ENCODE measurements at regions of chr19 and their contacts with region 1.

Region 1: GRCh38 chr19:42280192-42281145 is 11.4 kb downstream of the CIC start:
- DNase-seq: peak; percentile 94 to 100 (median 98)

Region 2: DNA sequence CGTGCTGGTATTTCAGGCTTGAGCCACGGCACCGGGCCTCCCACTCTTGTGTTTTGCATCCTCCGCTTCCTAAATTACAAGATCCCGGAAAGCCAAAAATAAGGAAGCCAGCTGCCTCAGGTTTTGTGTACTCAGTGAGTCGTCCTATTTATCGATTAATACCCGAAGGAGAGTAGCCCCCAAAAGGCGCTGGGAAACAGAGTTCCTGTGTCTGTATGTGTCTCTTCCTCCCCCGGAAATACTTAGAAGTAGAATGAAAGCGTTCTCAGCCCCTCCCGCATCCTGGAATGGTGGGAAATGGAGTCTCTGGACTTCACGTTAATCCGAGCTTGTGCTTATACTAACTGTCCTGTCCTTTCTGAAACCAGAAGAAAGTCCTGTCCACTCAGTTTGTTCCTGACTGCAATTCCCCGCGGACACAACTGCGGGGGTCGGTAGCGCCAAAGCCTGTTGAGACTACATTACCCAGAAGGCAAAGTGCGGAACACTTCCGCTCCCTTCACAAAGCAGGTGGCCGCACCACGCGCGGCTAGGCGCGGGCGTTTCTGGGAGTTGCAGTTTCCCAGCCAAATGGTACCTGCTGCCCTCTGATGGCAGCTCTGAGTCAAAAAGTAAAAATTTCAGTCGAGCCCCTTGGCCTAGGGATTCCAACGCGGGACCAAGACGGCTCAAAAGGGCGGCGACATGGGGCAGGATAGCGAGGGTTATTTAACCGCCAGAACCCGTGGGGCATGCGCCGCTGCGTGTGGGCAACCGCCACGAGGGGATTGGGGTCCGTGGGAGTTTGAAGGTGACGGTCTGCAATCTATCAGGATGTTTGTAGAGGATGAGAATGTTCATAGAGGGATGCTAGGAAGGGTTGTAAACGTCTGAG is 35.9 kb before region 1 on chr19:
- intact Hi-C with region 1: loop called (anchors 2 kb)
- DNase-seq: peak; percentile 88 to 98 (median 95)

Region 3: DNA sequence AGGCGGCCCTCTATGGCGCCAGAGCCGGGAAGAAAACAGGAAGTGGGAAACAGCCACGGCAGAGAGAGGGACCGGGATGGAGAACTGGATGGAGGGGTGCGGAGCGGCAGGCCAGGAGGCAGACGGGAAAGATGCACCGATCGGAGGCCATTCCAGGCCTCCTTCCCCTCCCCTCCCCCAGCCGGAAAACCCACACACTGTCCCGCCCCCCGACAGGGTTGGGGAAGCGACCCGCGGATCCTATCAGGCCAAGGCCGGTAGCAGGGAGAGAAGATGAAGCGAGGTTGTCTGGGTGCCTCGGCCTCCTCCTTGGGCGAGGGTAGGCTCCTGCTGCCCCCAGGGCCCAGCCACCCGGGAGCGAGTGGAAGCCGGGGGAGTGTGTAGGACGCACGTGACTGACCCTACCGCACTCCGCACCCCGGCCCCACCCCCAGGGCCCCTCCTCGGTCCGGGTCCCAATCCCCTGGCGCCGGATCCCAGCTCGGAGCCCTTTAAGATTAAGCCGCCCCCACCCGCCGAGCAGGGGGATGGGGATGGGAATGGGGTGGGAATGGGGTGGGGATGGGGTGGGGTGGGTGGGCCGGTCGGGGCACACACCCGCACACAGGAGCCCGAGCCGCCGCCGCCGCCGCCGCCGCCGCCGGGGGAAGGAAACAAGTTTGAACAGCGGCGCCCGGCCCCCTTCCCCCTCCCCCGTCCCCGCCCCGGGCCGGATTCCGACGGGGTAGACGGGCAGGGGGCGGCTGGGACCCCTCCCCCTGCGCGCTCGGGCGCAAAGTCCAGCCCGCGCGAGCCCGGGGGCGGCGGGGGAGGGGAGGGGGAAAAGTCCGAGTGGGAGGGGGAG is 27.0 kb before region 1 on chr19:
- intact Hi-C with region 1: loop called (anchors 2 kb)
- DNase-seq: peak in 36 of 42 donors; percentile 32 to 84 (median 62)

Region 4: GRCh38 chr19:42423462-42424344 is 143.2 kb after region 1 on chr19:
- intact Hi-C with region 1: no loop called
- DNase-seq: peak; percentile 87 to 98 (median 94)